SK-N-SH (cell line): ENCODE measurements at regions of chr2 and their contacts with region 1.

Region 1: GRCh38 chr2:201866643-201867473 is 60.5 kb downstream of the CDK15 start:
- DNase-seq: no peak
- H3K4me3 ChIP-seq: no peak overlapping the region
- H3K27ac ChIP-seq: peak overlapping the region in 1 of 2 experiments; percentile 25; a peak in 1 of 4 replicates
- H3K4me1 ChIP-seq: peaks cover 3 to 7% of the 10 kb centered on the region in 2 experiments; a peak in 2 of 4 replicates
- H3K27me3 ChIP-seq: no peaks in the 10 kb centered on the region
- CTCF ChIP-seq: no peak
- EP300 ChIP-seq: no peak
- RAD21 ChIP-seq: no peak

Region 2: DNA sequence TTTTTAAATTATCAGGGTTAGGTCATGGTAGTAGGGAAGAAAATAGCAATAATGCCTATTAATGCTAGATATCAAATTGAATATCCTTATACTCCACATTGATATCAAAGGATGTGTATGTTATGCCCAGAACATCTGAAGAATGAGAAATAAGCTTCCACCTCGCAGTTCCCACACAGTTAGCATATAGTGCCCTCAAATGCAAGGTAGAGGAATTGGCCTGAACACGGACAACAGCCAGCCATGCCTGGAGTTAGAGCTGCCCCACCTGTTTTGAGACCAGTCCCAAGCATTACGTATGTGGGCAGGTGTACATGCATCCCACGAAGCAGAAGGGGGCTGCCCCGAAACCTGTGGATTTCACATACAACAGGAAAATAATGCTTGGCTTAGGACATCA is 291.9 kb after region 1 on chr2:
- CTCF ChIA-PET with region 1: interaction called, 49 read pairs
- POLR2A ChIA-PET with region 1: no interaction called
- DNase-seq: no peak
- H3K4me3 ChIP-seq: no peak overlapping the region
- H3K27ac ChIP-seq: no peak overlapping the region
- H3K4me1 ChIP-seq: peaks cover 6 to 7% of the 10 kb centered on the region in 2 experiments; a peak in 2 of 4 replicates
- H3K27me3 ChIP-seq: no peaks in the 10 kb centered on the region
- CTCF ChIP-seq: peak; percentile 49
- EP300 ChIP-seq: no peak
- RAD21 ChIP-seq: peak; percentile 89